CD4-positive, alpha-beta T cell (primary cell): ENCODE measurements at regions of chr12 and their contacts with region 1.

Region 1: GRCh38 chr12:51270067-51270970 is at the start of gene SMAGP:
- DNase-seq: peak in 13 of 14 experiments; percentile 14 to 70 (median 28)
- ATAC-seq: peak; percentile 44
- H3K4me3 ChIP-seq: peak within 1 kb of the TSS; percentile 72
- H3K4me3 Mint-ChIP-seq: peak within 1 kb of the TSS; percentile 95
- H3K27ac ChIP-seq: peak within 1 kb of the TSS in 1 of 2 donors; percentile 36
- H3K27ac Mint-ChIP-seq: peak within 1 kb of the TSS; percentile 71
- H3K4me1 ChIP-seq: peaks cover 21% of the 10 kb centered on the region
- H3K4me1 Mint-ChIP-seq: peaks cover 32% of the 10 kb centered on the region
- H3K27me3 ChIP-seq: no peaks in the 10 kb centered on the region
- H3K27me3 Mint-ChIP-seq: no peaks in the 10 kb centered on the region
- CTCF ChIP-seq: no peak
- total RNA-seq, gene SMAGP: 2.5 to 3.0 TPM

Region 2: GRCh38 chr12:51351913-51352532 is 81.7 kb after region 1 on chr12:
- CTCF ChIA-PET with region 1: interaction called, 5 read pairs
- POLR2A ChIA-PET with region 1: interaction called, 3 read pairs
- intact Hi-C with region 1: loop called in 1 of 2 experiments (anchors 1 kb)
- DNase-seq: peak in 13 of 14 experiments; percentile 16 to 76 (median 27)
- ATAC-seq: peak; percentile 90
- H3K4me3 ChIP-seq: no peak overlapping the region
- H3K4me3 Mint-ChIP-seq: no peak overlapping the region
- H3K27ac ChIP-seq: no peak overlapping the region
- H3K27ac Mint-ChIP-seq: no peak overlapping the region
- H3K4me1 ChIP-seq: peaks cover 5% of the 10 kb centered on the region
- H3K4me1 Mint-ChIP-seq: peaks cover 10% of the 10 kb centered on the region
- H3K27me3 ChIP-seq: no peaks in the 10 kb centered on the region
- H3K27me3 Mint-ChIP-seq: no peaks in the 10 kb centered on the region
- CTCF ChIP-seq: peak; percentile 63

Region 3: DNA sequence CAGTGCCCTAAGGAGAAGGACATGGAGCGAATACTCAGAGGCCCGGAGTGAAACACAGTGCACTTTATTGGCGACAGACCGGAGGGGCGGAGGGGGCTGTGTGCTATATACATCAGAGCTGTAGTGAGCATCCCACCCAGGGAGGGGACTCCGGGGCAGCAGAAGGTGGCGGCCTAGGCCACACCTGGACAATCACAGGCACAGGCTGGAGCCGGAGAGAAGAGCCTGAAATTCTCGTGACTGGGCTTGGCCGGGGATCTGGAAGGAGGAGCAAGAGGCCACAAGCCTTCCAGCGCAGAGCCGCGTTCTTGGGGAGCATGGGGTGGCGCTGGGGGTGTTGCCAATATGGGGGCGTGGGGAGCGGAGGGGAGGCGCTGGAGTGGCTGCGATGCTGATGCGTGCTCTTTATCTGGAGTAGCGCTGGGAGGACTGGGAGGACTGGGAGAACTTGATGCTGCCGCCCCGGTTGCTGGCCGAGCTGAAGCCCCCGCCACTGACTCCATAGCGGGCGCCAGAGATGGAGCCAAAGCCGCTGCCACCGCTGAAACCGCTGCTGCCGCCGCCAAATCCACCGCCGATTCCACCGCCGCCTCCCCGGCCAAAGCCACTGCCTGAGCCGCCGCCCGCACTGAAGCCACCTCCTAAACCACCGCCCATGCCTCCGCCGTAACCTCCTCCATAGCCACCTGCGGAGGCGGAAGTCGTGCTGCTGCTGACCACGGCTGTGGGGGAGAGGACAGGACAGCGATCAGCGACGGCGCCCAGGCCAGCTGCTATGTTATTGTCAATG is 1519.5 kb after region 1 on chr12:
- CTCF ChIA-PET with region 1: no interaction called
- POLR2A ChIA-PET with region 1: no interaction called
- intact Hi-C with region 1: no loop called
- DNase-seq: peak in 1 of 14 experiments; percentile 4
- ATAC-seq: no peak
- H3K4me3 ChIP-seq: no peak overlapping the region
- H3K4me3 Mint-ChIP-seq: no peak overlapping the region
- H3K27ac ChIP-seq: no peak overlapping the region
- H3K27ac Mint-ChIP-seq: no peak overlapping the region
- H3K4me1 ChIP-seq: peaks cover 7% of the 10 kb centered on the region
- H3K4me1 Mint-ChIP-seq: peaks cover 17% of the 10 kb centered on the region
- H3K27me3 ChIP-seq: peaks cover 5 to 21% of the 10 kb centered on the region in 2 experiments
- H3K27me3 Mint-ChIP-seq: peaks cover 46% of the 10 kb centered on the region
- CTCF ChIP-seq: no peak